Motor neuron (in vitro differentiated cells): ENCODE measurements at regions of chr21 and their contacts with region 1.

Region 1: DNA sequence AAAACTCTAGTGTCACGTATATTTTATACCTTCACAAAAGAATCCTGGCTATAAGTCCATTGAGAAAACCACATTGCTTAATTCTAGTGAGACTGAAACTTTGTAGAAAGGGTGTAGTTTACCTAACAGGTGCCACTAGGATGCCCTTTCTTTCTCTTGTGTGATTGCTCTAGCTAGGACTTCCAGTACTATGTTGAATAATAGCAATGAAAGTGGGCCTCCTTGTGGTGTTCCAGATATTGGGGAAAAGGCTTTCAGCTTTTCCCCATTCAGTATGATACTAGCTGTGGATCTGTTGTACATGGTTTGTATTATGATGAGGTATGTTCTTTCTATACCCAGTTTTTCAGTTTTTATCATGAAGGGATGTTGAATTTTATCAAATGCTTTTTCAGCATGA is 39.7 kb upstream of the CHODL start:
- ATAC-seq: no peak
- H3K4me3 ChIP-seq: no peak overlapping the region
- H3K27ac ChIP-seq: no peak overlapping the region
- H3K4me1 ChIP-seq: no peaks in the 10 kb centered on the region

Region 2: GRCh38 chr21:18114810-18115209 is 90.1 kb before region 1 on chr21:
- in situ Hi-C with region 1: loop called in 1 of 9 experiments (anchors 25 kb)
- ATAC-seq: peak in 4 of 8 experiments; percentile 33 to 68 (median 52)
- H3K4me3 ChIP-seq: no peak overlapping the region
- H3K27ac ChIP-seq: no peak overlapping the region
- H3K4me1 ChIP-seq: no peaks in the 10 kb centered on the region